ENCODE measurements at regions of chr3 and their contacts with region 1.

Region 1: DNA sequence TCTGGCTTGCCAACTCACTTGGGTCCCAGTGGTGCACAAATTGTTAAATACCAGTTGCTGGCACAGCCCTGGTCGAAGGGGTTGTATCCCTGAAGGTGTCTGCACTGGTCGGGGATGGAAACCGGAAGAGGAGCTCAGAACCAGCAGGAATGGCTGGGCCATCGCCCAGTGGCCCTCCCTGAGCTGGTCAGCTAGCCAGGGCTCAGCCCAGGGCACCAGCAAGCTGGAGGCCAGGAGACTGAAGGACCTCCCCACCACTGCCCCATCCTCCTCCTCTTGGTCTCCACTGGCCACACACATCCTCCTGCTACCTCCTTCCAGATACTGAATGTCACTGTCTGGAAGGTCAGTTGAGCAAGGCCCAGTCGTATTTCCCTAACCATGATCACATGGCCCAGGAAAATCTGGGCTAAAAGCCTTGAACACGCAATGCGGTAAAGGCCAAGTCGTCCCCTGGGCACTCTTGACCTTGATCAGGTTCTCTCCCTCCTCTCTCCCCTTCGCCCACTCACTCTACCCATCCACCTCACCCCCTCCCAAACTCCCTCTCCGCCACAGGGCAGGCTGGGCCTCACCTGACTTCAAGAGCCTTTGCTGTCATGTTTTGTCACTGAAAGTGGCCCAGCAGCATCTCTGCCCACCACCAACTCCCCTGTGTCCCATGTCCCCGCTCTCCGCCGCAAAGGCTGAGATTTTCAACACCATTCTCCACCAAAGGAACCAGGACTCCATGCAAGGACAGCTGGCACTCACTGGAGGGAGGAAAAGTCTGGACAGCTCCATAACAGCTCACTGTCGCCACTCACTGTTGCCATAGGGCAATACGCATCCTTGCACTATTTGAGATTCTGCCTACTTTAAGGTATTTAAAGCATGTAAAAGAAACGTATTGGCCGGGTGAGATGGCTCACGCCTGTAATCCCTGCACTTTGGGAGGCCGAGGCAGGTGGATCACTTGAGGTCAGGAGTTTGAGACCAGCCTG is 12.1 kb downstream of the ZDHHC19 start:
- DNase-seq: no peak
- ATAC-seq: no peak
- H3K4me3 Mint-ChIP-seq: no peak overlapping the region
- H3K27ac Mint-ChIP-seq: no peak overlapping the region
- H3K4me1 Mint-ChIP-seq: peaks cover 20% of the 10 kb centered on the region
- H3K27me3 Mint-ChIP-seq: no peaks in the 10 kb centered on the region
- CTCF ChIP-seq: no peak

Region 2: DNA sequence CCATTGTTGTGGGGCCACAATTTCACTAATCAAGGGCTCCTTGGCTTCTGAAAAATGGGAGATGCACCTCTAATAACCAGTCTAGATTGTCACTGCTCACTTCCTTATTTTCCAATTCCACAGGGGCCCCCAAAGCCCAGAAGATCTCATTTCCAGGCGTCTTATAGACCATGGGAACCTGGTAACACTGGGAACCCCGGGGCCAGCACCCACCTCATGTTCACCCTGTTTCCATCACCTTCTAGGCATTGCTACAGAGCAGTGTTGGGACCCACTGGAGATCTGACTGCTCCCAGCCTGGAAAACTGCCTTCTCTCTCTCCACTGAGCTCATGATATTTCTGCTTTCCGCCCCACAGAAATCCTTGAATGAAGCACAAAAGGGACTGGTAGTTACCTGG is 178.7 kb before region 1 on chr3:
- CTCF ChIA-PET with region 1: interaction called, 22 read pairs
- POLR2A ChIA-PET with region 1: no interaction called
- intact Hi-C with region 1: loop called (anchors 5 kb)
- DNase-seq: no peak
- ATAC-seq: no peak
- H3K4me3 Mint-ChIP-seq: no peak overlapping the region
- H3K27ac Mint-ChIP-seq: no peak overlapping the region
- H3K4me1 Mint-ChIP-seq: no peaks in the 10 kb centered on the region
- H3K27me3 Mint-ChIP-seq: peaks cover 5% of the 10 kb centered on the region
- CTCF ChIP-seq: no peak

Region 3: GRCh38 chr3:196039358-196039757 is 159.7 kb before region 1 on chr3:
- CTCF ChIA-PET with region 1: interaction called, 11 read pairs
- POLR2A ChIA-PET with region 1: no interaction called
- intact Hi-C with region 1: no loop called
- DNase-seq: no peak
- ATAC-seq: no peak
- H3K4me3 Mint-ChIP-seq: no peak overlapping the region
- H3K27ac Mint-ChIP-seq: no peak overlapping the region
- H3K4me1 Mint-ChIP-seq: peaks cover 8% of the 10 kb centered on the region
- H3K27me3 Mint-ChIP-seq: no peaks in the 10 kb centered on the region
- CTCF ChIP-seq: no peak

Region 4: DNA sequence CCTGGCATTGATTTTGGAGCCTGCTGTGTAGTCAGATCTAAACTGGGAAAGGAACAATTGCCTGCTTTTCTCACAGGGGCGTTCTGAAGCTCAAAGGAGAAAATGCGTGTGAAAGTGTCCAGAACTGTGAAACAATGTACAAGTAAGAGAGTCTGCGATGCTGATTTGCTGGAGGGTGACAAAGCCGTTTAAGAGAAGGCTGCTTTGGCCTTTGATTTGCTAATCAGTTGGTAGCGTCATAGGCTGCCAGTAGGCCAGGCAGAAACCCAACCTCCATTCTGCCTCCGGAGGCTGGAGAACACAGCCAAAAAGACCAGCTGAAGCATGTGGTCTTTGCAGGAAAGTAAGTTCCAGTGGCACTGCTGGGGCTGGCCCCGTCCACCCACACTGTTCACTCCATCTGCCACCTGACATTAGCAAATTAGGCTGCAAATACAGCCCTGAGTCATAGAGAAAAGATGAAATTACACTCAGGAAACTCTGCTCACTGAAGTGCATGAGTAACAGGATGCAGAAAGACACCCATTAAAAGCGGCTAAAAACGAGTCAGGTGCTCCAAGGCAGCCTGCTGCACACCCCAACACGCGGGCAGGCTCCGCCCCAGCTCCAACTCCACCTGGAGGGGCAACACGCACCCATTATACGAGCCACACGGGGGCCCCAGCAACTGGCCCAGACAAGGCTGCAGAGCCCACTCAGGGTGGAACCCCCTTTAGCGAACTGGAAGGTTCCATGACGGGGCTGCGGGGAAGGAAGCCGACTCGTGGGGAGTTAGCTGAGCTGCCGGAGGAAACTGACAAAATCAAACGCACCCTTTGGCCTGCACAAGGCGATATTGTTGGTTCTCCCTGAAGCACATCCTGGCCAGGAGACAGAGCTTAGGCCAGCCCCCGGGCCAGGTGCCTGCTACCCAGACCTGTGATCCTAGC is 19.4 kb before region 1 on chr3:
- CTCF ChIA-PET with region 1: interaction called, 13 read pairs
- POLR2A ChIA-PET with region 1: interaction called, 11 read pairs
- intact Hi-C with region 1: no loop called
- DNase-seq: peak; percentile 98
- ATAC-seq: peak; percentile 85
- H3K4me3 Mint-ChIP-seq: peak overlapping the region; percentile 61
- H3K27ac Mint-ChIP-seq: peak overlapping the region; percentile 100
- H3K4me1 Mint-ChIP-seq: peaks cover 52% of the 10 kb centered on the region
- H3K27me3 Mint-ChIP-seq: no peaks in the 10 kb centered on the region
- CTCF ChIP-seq: no peak

Region 5: DNA sequence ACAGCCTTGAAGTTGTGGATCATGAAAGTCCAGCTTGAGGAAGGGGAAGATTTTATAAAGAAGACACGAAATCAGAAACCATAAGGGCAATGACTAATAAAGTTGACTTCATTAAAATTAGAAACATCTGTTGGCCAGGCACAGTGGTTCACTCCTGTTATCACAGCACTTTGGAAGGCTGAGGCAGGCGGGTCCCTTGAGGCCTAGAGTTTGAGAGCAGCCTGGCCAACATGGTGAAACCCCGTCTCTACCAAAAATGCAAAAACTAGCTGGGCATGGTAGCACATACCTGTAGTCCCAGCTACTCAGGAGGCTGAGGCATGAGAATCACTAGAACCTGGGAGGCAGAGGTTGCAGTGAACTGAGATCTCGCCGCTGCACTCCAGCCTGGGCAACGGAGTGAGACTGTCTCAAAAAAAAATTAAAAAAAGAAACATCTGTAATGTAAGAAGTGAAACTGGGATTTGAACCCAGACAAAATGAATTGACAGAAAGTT is 241.0 kb after region 1 on chr3:
- CTCF ChIA-PET with region 1: no interaction called
- POLR2A ChIA-PET with region 1: no interaction called
- intact Hi-C with region 1: no loop called
- DNase-seq: no peak
- ATAC-seq: no peak
- H3K4me3 Mint-ChIP-seq: no peak overlapping the region
- H3K27ac Mint-ChIP-seq: no peak overlapping the region
- H3K4me1 Mint-ChIP-seq: peaks cover 2% of the 10 kb centered on the region
- H3K27me3 Mint-ChIP-seq: no peaks in the 10 kb centered on the region
- CTCF ChIP-seq: no peak

Measured in activated CD8-positive, alpha-beta T cell treated with anti-CD3 and anti-CD28 coated beads for 36 hours (primary cell).